A549 (cell line): ENCODE measurements at regions of chr15 and their contacts with region 1.

Region 1: DNA sequence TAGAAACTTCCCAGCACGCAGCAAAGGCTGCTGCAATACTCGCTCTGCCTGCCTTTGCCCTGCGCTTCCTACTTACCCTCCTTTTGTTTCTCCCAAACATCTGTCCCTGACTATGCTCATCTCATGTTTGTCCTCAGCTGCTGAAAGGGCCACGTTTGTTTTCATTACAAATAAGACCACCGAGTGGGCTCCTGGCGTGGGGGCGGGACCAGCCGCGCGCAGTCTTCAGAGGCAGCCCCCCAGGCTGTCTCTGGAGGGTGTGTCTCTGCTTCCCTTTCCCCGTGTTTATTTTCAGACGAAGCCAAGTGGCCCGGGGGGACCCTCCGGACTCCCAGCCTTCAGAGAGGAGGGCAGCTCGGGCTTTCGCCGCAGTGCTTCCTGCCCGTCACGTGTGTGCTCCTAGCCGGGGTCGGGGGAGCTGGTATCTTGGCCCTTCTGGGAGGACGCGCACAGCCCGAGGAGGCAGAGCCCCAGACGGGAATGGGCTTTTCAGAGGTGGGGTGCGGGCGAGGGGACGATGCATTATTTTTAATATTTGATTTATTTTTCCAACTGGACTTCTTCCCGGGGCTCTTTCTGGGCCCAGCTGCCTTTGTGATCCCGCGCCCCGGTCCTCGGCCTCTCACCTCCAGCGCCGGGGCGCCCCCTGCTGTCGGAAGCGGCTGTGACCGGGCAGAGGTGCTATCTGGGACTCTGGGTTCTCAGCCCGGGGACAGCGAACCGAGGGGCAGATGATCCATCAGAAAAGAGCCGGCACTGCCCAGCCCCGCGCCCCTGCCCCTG is 70.0 kb upstream of the CGNL1 start:
- DNase-seq: peak; percentile 77 to 96
- ATAC-seq: peak; percentile 88 to 96
- H3K4me3 ChIP-seq: peak overlapping the region; percentile 48
- H3K27ac ChIP-seq: peak overlapping the region; percentile 73 to 87
- H3K4me1 ChIP-seq: peaks cover 16% of the 10 kb centered on the region
- CTCF ChIP-seq: peak; percentile 96
- EP300 ChIP-seq: no peak
- POLR2A ChIP-seq: no peak
- RAD21 ChIP-seq: peak; percentile 88 to 96

Region 2: GRCh38 chr15:56496635-56497034 is 809.7 kb before region 1 on chr15:
- CTCF ChIA-PET with region 1: interaction called, 55 read pairs
- POLR2A ChIA-PET with region 1: no interaction called
- DNase-seq: peak; percentile 75 to 79
- ATAC-seq: peak; percentile 81 to 95; a peak in 5 of 6 replicates
- H3K4me3 ChIP-seq: no peak overlapping the region; the same call in 2 of the 3 replicates
- H3K27ac ChIP-seq: no peak overlapping the region
- H3K4me1 ChIP-seq: no peaks in the 10 kb centered on the region
- CTCF ChIP-seq: peak; percentile 89
- EP300 ChIP-seq: no peak
- POLR2A ChIP-seq: no peak
- RAD21 ChIP-seq: peak; percentile 83 to 86

Region 3: GRCh38 chr15:57146506-57147201 is 159.7 kb before region 1 on chr15:
- CTCF ChIA-PET with region 1: interaction called, 114 read pairs
- POLR2A ChIA-PET with region 1: no interaction called
- DNase-seq: peak; percentile 14 to 56
- ATAC-seq: peak; percentile 54 to 61; a peak in 2 of 6 replicates
- H3K4me3 ChIP-seq: no peak overlapping the region
- H3K27ac ChIP-seq: no peak overlapping the region
- H3K4me1 ChIP-seq: peaks cover 5% of the 10 kb centered on the region; the same call in 1 of the 3 replicates
- CTCF ChIP-seq: peak; percentile 95
- EP300 ChIP-seq: no peak
- POLR2A ChIP-seq: no peak
- RAD21 ChIP-seq: peak; percentile 88 to 90

Region 4: DNA sequence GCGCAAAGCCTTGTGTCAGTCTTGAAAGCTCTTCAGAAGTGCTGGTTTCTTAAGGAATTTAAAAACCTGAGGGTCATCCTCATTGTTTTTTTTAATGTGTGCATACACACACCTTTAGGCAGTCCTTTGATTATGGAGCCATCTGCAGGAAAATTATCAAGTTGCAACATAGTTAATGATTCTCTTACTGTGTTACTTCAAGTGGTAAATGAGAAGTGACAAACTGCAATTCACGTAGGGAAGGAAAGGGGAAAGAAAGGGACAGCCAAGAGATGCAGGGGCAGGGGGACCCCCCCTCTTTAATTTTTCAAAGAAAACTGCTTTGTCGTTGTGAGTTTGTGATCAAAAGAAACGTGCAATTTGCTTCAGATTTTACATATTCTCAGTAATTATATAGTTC is 92.5 kb before region 1 on chr15:
- CTCF ChIA-PET with region 1: interaction called, 19 read pairs
- POLR2A ChIA-PET with region 1: no interaction called
- DNase-seq: peak; percentile 8 to 51
- ATAC-seq: peak; percentile 72 to 73; a peak in 5 of 6 replicates
- H3K4me3 ChIP-seq: no peak overlapping the region
- H3K27ac ChIP-seq: no peak overlapping the region
- H3K4me1 ChIP-seq: peaks cover 36% of the 10 kb centered on the region
- CTCF ChIP-seq: peak; percentile 64
- EP300 ChIP-seq: no peak
- POLR2A ChIP-seq: no peak
- RAD21 ChIP-seq: peak; percentile 75 to 84

Region 5: GRCh38 chr15:57323806-57324589 is 17.6 kb after region 1 on chr15:
- CTCF ChIA-PET with region 1: interaction called, 29 read pairs
- POLR2A ChIA-PET with region 1: interaction called, 9 read pairs
- DNase-seq: peak; percentile 96 to 98
- ATAC-seq: peak; percentile 85 to 94
- H3K4me3 ChIP-seq: peak overlapping the region; percentile 32
- H3K27ac ChIP-seq: peak overlapping the region; percentile 91 to 95
- H3K4me1 ChIP-seq: peaks cover 31% of the 10 kb centered on the region
- CTCF ChIP-seq: no peak
- EP300 ChIP-seq: no peak
- POLR2A ChIP-seq: no peak
- RAD21 ChIP-seq: no peak